Panc1 (cell line): ENCODE measurements at regions of chrX and their contacts with region 1.

Region 1: DNA sequence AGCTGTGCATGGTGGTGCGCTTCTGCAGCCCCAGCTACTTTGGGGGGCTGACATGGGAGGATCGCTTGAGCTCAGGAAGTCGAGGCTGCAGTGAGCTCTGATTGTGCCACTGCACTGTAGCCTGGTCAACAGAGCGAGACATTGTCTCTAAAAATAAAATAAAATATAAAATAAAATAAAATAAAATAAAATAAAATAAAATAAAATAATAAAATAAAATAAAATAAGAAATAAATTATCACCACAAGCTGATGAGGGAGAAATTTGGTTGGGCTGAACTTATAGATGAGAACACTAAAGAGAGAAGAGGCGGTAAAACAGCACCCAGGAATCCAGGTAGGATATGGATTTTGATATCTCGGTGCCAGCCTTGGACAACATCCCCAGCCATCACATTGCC is 933.7 kb downstream of the NLGN4X start:
- DNase-seq: no peak
- ATAC-seq: no peak
- H3K4me3 ChIP-seq: no peak overlapping the region
- H3K27ac ChIP-seq: no peak overlapping the region
- H3K4me1 ChIP-seq: no peaks in the 10 kb centered on the region
- H3K27me3 ChIP-seq: no peaks in the 10 kb centered on the region
- CTCF ChIP-seq: no peak

Region 2: GRCh38 chrX:4091046-4091760 is 1203.8 kb before region 1 on chrX:
- CTCF ChIA-PET with region 1: no interaction called
- POLR2A ChIA-PET with region 1: interaction called, 19 read pairs
- in situ Hi-C with region 1: no loop called
- intact Hi-C with region 1: no loop called
- DNase-seq: no peak
- ATAC-seq: no peak
- H3K4me3 ChIP-seq: no peak overlapping the region
- H3K27ac ChIP-seq: no peak overlapping the region
- H3K4me1 ChIP-seq: no peaks in the 10 kb centered on the region
- H3K27me3 ChIP-seq: no peaks in the 10 kb centered on the region
- CTCF ChIP-seq: no peak

Region 3: DNA sequence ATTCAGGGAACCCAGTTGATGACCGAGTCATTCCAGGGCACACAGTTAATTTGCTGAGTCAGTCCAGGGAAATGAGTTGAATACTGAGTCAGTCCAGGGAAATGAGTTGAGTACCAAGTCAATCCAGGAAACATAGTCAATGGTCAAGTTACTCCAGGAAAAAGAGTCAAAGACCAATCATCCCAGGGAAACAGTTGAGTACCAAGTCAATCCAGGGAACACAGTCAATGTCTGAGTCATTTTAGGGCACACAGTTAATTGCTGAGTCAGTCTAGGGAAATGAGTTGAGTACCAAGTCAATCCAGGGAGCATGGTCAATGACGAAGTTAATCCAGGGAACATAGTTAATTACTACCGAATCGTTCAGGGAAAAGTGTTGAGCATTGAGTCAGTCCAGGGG is 179.3 kb after region 1 on chrX:
- CTCF ChIA-PET with region 1: no interaction called
- POLR2A ChIA-PET with region 1: no interaction called
- in situ Hi-C with region 1: no loop called
- intact Hi-C with region 1: no loop called
- DNase-seq: no peak
- ATAC-seq: no peak
- H3K4me3 ChIP-seq: no peak overlapping the region
- H3K27ac ChIP-seq: no peak overlapping the region
- H3K4me1 ChIP-seq: no peaks in the 10 kb centered on the region
- H3K27me3 ChIP-seq: no peaks in the 10 kb centered on the region
- CTCF ChIP-seq: no peak